ENCODE measurements at regions of chr6 and their contacts with region 1.

Region 1: DNA sequence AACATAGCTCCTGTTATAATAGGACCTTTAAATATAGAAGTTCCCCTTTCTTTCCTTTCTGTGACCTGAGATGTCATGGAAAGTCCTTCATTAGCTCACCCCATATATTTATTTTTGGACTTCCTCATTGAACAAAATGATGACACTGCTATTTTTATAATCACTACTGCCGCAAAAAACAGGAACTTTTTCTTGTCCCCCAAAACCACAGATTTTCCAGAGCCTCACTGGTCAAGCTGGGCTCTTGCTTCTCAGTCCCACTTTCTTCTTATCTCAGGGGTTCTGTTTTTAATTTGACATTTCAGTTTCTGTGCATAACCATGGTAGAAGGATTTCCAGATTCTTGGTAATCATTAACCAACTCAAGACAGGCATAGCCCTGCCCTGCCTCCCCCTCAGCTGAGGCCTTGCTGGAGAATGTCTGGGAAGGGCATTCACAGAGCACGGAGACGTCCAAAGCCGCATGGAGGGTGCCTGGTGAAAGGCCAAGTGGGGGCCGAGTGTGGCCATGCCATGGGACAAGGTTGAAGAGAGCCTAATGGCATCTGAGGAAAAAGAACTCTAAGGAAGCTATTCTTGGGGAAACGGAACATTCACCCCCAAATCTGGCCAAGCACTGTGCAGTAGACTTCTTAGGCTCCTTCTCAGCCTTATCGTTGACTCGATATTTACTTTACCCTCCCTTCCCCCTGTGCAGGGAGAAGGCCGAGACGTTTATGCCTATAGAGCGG is 73.7 kb downstream of the EDN1 start:
- DNase-seq: peak; percentile 83 to 93
- ATAC-seq: peak; percentile 88
- H3K4me3 ChIP-seq: no peak overlapping the region
- H3K27ac ChIP-seq: peak overlapping the region; percentile 89 to 92
- H3K4me1 ChIP-seq: peaks cover 52% of the 10 kb centered on the region
- CTCF ChIP-seq: no peak
- EP300 ChIP-seq: no peak
- POLR2A ChIP-seq: no peak
- RAD21 ChIP-seq: peak; percentile 15 to 30; a peak in 3 of 5 replicates

Region 2: DNA sequence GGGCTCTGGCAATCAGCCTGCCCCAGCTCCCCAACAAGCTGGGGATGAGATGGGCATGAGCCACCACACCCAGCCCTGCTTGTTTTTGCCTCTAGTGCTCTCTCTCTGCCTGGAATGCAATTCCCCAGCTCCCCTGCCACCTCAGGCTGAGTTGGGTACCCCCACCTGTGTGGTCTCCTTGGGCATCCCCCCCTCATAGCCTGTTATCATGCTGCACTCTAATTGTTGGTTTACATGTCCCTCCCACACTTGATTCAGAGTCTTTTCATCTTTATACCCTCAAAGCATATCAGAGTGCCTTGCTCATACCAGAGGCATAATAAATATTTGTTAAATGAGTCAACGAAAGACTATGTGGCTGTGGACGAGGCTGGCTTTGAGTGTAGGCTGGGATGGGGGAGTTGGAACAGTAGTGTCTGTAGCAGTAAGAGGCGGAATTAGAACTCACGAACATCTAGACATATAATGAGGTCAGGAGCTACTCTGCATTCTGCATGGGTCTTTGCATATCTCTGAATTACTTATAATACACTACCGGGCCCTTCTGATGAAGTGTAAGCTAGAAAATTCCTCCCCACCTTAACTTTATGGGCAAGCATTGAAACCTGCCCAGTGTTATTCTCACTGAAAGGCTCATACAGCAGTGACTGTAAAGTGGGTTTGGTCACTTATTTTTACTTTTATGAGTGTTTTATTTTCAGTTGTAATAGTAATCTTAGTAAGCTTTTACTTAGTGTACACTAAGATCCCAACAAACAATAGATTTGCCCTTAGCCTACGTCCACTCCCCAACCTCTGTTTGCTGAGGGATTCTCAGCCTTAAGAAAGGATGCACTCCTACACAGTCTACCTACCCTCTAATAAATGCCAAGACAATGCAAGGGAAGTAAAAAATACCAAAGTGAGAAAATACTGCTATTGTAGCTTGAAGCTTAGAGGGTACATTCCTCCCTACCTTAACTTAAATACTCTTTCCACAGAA is 15.0 kb before region 1 on chr6:
- CTCF ChIA-PET with region 1: interaction called, 3 read pairs
- POLR2A ChIA-PET with region 1: interaction called, 12 read pairs
- DNase-seq: peak; percentile 78 to 98
- ATAC-seq: peak; percentile 94 to 97
- H3K4me3 ChIP-seq: no peak overlapping the region
- H3K27ac ChIP-seq: peak overlapping the region; percentile 85 to 88
- H3K4me1 ChIP-seq: peaks cover 59% of the 10 kb centered on the region
- CTCF ChIP-seq: no peak
- EP300 ChIP-seq: peak; percentile 98 to 99
- POLR2A ChIP-seq: no peak
- RAD21 ChIP-seq: peak; percentile 53 to 82

Measured in A549 (cell line).